IMR-90 (cell line): ENCODE measurements at regions of chr1 and their contacts with region 1.

Region 1: DNA sequence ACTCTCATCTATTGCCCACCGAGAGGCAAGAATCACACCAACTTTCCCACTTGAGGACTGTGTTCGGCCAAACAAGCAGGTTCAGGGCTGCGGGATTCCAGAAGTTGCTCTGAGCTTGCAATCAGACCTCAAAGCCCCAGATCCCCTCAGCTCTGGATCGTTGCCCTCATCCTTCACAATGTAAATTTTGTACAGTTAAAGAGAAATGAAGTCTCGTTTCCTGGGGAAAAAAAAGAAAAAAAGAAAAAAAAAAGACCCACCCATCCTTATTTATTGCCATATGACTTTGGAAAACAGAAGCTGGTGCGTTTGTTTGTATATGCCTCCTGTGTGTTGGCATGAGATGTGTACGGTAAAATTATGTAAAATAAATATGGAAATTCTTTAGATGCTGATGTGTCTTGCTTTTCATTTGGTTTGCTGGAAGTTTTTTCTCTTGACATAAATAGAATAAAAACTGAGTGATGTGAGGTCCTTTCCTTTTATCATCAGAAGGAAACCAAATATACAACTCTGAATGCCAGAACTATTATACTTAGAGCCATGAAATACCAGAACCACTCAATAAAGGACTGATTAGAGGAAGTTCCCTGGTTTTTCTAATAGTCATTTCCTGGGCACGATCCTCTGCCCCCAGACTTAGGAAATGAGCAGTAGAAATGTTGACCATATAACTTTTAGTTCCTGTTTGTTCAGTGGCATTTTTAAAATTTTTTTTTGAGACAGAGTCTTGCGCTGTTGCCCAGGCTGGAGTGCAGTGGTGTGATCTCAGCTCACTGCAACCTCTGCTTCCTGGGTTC is 48.7 kb downstream of the LHX4 start:
- DNase-seq: peak; percentile 15
- ATAC-seq: peak; percentile 73
- H3K4me3 ChIP-seq: no peak overlapping the region
- H3K27ac ChIP-seq: no peak overlapping the region
- H3K4me1 ChIP-seq: peaks cover 2% of the 10 kb centered on the region; the same call in 1 of the 2 replicates
- H3K27me3 ChIP-seq: no peaks in the 10 kb centered on the region
- CTCF ChIP-seq: no peak
- POLR2A ChIP-seq: no peak
- RAD21 ChIP-seq: no peak

Region 2: GRCh38 chr1:180252638-180253536 is 25.9 kb before region 1 on chr1:
- CTCF ChIA-PET with region 1: no interaction called
- POLR2A ChIA-PET with region 1: no interaction called
- dilution Hi-C with region 1: no loop called
- in situ Hi-C with region 1: no loop called
- intact Hi-C with region 1: no loop called
- DNase-seq: peak; percentile 65
- ATAC-seq: peak; percentile 74
- H3K4me3 ChIP-seq: no peak overlapping the region
- H3K27ac ChIP-seq: no peak overlapping the region
- H3K4me1 ChIP-seq: peaks cover 4% of the 10 kb centered on the region; the same call in 1 of the 2 replicates
- H3K27me3 ChIP-seq: peaks cover 13% of the 10 kb centered on the region
- CTCF ChIP-seq: peak; percentile 93
- POLR2A ChIP-seq: no peak
- RAD21 ChIP-seq: peak; percentile 94

Region 3: DNA sequence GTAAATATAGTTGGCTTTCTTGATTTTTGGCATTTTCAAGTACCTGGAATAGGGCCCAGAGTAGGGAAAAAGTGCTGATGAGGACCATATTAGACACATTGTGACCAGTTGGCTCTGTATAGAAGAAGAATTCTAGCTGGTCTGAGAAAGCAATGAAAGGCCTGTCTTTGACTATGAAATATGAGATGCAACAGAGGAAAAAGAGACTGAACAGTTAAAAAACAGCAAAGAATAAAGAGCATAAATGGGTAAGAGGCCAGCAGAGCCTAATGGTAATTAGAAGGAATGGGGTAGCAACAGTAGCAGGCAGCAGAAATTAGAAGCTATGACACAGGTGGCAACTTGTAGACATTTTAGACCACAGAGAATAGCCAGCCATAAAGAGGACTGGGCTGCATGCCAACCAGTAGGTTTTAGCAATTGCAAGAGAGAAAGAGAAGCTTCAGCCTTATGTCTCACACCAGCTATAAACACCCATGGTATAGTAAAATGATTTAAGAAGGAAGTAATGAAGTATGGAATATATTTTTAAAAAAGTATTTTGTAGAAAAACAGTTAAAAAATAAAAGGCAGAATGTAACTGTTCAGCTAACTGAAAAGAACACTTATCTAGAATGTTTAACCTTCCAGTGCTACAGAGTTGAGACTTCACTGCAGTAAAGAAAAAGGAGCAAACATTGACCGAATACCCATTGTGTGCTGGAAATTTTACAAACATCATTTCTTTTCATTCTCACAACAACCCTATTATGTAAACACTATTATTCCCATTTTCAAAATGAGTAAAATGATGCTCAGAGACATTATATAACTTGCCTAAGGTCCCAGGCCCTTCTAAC is 65.4 kb after region 1 on chr1:
- CTCF ChIA-PET with region 1: no interaction called
- POLR2A ChIA-PET with region 1: no interaction called
- dilution Hi-C with region 1: no loop called
- in situ Hi-C with region 1: no loop called
- intact Hi-C with region 1: loop called (anchors 5 kb)
- DNase-seq: peak; percentile 47
- ATAC-seq: peak; percentile 46; the same call in 1 of the 2 replicates
- H3K4me3 ChIP-seq: no peak overlapping the region
- H3K27ac ChIP-seq: no peak overlapping the region
- H3K4me1 ChIP-seq: 0 out of 2 replicates have a peak, but pooled peaks cover 2% of the 10 kb centered on the region
- H3K27me3 ChIP-seq: no peaks in the 10 kb centered on the region
- CTCF ChIP-seq: no peak
- POLR2A ChIP-seq: no peak
- RAD21 ChIP-seq: no peak

Region 4: DNA sequence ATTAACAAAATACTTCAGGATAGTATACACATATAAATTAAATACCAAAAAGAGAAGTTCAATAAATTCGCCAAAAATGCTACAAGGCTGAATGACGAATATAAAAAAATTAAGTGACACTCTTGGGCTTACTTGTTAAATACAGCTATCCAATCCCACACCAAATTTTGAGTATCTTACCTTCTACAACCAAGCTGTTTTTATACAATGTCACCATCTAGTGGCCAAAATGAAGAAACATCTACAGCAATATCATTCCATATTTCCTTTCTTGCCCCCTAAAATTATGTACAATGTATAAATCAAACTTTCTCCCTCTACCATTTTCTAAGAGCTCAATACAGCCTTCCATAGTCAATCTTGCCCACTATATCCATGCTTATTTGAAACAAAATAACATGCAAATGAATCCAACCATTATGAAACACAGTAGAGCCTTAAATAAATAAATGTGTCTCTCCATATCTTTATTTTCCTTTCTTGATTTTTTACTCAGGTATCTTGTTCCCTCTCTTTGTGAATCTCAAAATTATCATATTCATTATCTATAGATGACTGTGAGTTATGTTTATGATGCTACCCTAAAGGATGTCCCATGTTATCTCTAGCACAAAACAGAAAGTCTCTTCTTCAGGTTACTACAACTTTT is 137.3 kb after region 1 on chr1:
- CTCF ChIA-PET with region 1: interaction called, 4 read pairs
- POLR2A ChIA-PET with region 1: no interaction called
- dilution Hi-C with region 1: no loop called
- in situ Hi-C with region 1: no loop called
- intact Hi-C with region 1: loop called (anchors 5 kb)
- DNase-seq: peak; percentile 55
- ATAC-seq: no peak
- H3K4me3 ChIP-seq: no peak overlapping the region
- H3K27ac ChIP-seq: no peak overlapping the region
- H3K4me1 ChIP-seq: no peaks in the 10 kb centered on the region
- H3K27me3 ChIP-seq: no peaks in the 10 kb centered on the region
- CTCF ChIP-seq: peak; percentile 65
- POLR2A ChIP-seq: no peak
- RAD21 ChIP-seq: peak; percentile 77

Region 5: GRCh38 chr1:181142096-181142958 is 863.5 kb after region 1 on chr1:
- CTCF ChIA-PET with region 1: no interaction called
- POLR2A ChIA-PET with region 1: no interaction called
- dilution Hi-C with region 1: no loop called
- in situ Hi-C with region 1: no loop called
- intact Hi-C with region 1: no loop called
- DNase-seq: peak; percentile 89
- ATAC-seq: peak; percentile 93
- H3K4me3 ChIP-seq: peak overlapping the region; percentile 6; the same call in 1 of the 2 replicates
- H3K27ac ChIP-seq: peak overlapping the region; percentile 59
- H3K4me1 ChIP-seq: peaks cover 29% of the 10 kb centered on the region
- H3K27me3 ChIP-seq: no peaks in the 10 kb centered on the region
- CTCF ChIP-seq: peak; percentile 98
- POLR2A ChIP-seq: peak; percentile 45; the same call in 1 of the 2 replicates
- RAD21 ChIP-seq: peak; percentile 100